Naive thymus-derived CD4-positive, alpha-beta T cell (primary cell): ENCODE measurements at regions of chr22 and their contacts with region 1.

Region 1: DNA sequence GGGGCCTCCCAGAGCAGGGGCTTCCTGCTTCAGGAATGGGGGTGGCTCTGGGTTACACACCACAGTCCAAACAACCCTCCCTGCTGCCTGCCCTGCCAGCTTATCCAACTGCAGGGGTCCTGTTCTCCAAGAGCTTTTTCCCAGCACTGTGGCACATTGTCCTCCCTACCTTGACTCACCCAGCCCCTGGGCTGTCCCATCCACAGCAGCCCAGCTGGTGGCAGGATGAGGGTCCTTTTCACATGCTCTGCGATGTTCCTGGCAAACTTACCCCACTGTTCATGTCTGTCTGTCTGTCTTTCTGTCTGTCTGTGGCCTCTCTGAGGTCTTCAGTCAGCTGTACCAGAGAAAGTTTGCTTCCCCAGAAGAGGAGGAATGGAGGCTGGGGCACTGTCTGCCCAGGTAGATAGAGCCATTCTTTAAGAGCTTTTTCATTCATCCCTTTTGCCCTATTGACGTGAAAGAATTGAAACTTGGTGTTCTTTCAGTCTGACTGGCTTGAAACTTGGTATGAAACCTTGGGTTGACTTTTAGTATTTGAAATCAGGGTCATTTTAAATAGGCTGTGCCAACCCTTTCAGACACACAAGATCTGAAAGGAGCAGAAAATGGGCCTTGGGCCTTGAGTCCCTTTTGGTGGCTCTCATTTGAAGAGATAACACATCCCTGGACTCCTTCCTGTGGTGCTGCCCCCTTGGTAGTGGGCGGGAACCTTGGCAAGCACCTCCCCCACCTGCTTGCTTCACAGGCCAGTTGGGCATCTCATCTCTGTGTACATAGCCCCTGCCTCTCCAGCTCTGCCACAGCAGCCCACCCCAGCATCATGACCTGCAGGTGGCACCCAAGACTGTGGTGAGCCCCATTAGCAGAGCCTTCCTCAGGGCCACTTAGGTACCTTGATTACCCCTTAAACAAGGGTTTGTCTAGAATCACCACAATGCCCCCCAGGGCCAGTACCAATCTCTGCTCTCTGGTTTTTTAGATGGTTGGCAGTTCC is 74.6 kb upstream of the SUSD2 start:
- DNase-seq: peak in 7 of 9 donors; percentile 26 to 39 (median 30)
- ATAC-seq: peak; percentile 68
- H3K4me3 ChIP-seq: no peak overlapping the region
- H3K4me3 Mint-ChIP-seq: no peak overlapping the region
- H3K27ac ChIP-seq: peak overlapping the region; percentile 14
- H3K27ac Mint-ChIP-seq: peak overlapping the region in 8 of 9 donors; percentile 25 to 92 (median 46)
- H3K4me1 ChIP-seq: no peaks in the 10 kb centered on the region
- H3K4me1 Mint-ChIP-seq: peaks cover 0 to 24% (median 4%) of the 10 kb centered on the region in 7 donors
- H3K27me3 ChIP-seq: no peaks in the 10 kb centered on the region
- H3K27me3 Mint-ChIP-seq: no peaks in the 10 kb centered on the region

Region 2: DNA sequence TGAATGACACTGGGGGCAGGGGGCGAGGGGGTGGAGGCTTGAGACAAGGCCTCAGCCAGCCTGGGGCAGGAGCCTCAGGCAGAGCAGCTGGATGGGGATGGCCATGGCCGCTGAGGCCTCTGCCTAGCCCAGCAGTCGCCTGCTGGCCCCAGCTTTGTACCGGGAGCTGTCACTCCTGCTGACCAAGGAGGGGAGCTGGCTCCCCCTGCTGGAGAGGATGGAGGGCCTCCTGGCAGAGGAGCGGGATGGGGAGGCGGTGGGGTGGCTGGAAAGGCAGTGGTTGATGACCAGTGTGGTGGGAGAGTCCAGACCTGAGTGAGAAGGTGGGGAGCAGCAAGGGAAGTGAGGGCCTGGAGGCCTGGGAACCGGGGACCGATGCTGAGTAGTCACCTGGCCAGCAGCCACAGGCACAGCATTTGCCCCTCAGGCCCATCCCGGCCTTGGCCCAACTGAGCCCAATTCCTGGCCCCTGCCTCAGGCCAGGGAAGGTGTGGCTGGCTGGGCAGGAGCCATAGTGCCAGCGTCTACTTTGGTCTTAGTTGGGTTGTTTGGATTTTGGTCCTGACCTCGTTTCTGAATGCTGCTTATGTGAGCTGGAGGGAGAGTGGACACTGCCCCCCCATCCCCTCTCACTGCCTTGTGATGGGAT is 68.6 kb after region 1 on chr22:
- CTCF ChIA-PET with region 1: interaction called, 7 read pairs
- POLR2A ChIA-PET with region 1: no interaction called
- intact Hi-C with region 1: loop called in 1 of 2 experiments (anchors 1 kb)
- DNase-seq: peak; percentile 35 to 69 (median 60)
- ATAC-seq: peak; percentile 73
- H3K4me3 ChIP-seq: no peak overlapping the region
- H3K4me3 Mint-ChIP-seq: no peak overlapping the region
- H3K27ac ChIP-seq: no peak overlapping the region
- H3K27ac Mint-ChIP-seq: peak overlapping the region in 3 of 9 donors; percentile 17 to 46 (median 34)
- H3K4me1 ChIP-seq: no peaks in the 10 kb centered on the region
- H3K4me1 Mint-ChIP-seq: no peaks in the 10 kb centered on the region
- H3K27me3 ChIP-seq: no peaks in the 10 kb centered on the region
- H3K27me3 Mint-ChIP-seq: no peaks in the 10 kb centered on the region

Region 3: DNA sequence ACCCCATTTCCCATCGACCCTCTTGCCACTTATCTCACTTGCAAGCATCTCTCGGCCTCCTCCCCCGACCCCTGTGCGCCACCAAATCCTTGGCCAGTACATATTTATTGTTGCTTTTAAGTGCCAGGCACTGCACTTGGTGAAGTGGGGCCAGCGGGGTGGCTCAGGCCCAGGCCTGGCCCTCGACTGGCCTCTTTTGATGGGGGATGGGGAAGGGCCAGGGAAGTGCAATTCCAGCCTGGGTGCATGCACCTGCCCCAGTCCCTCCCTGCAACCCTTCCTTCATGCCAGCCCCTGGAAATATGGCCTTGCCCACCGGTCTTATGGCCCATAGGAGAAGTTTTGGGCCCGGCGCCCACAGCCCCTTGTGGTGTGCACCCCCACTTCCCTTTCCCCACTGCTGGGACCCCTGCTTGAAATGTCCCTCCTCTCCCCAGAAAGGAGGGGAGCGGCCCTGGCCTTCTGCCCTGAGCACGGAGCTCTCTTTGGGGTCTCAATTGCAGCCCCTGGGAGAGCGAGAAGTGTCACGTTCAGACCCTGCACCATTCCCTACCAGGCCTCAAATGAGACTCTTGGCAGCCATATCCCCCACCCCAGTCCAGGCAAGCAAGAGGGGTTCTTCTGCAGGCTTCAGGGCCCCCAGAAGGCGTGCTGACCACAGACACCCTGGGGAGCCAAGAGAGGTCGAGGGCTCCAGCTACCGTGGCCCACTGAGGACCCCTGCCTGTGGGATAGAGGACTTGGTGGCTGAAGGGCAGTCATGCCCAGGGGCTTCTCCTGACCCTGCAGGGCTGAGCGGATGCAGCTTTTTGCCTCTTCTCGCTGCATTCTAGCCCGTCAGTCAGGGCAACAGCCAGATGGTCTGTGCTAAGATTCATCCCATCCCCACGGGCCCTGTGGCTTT is 75.6 kb after region 1 on chr22:
- CTCF ChIA-PET with region 1: interaction called, 3 read pairs
- POLR2A ChIA-PET with region 1: no interaction called
- intact Hi-C with region 1: loop called in 1 of 2 experiments (anchors 2 kb)
- DNase-seq: no peak
- ATAC-seq: no peak
- H3K4me3 ChIP-seq: no peak overlapping the region
- H3K4me3 Mint-ChIP-seq: no peak overlapping the region
- H3K27ac ChIP-seq: no peak overlapping the region
- H3K27ac Mint-ChIP-seq: peak overlapping the region in 1 of 9 donors; percentile 8
- H3K4me1 ChIP-seq: no peaks in the 10 kb centered on the region
- H3K4me1 Mint-ChIP-seq: peaks cover 0 to 5% (median 0%) of the 10 kb centered on the region in 7 donors
- H3K27me3 ChIP-seq: no peaks in the 10 kb centered on the region
- H3K27me3 Mint-ChIP-seq: no peaks in the 10 kb centered on the region